WTC11 (cell line): ENCODE measurements at regions of chr9 and their contacts with region 1.

Region 1: DNA sequence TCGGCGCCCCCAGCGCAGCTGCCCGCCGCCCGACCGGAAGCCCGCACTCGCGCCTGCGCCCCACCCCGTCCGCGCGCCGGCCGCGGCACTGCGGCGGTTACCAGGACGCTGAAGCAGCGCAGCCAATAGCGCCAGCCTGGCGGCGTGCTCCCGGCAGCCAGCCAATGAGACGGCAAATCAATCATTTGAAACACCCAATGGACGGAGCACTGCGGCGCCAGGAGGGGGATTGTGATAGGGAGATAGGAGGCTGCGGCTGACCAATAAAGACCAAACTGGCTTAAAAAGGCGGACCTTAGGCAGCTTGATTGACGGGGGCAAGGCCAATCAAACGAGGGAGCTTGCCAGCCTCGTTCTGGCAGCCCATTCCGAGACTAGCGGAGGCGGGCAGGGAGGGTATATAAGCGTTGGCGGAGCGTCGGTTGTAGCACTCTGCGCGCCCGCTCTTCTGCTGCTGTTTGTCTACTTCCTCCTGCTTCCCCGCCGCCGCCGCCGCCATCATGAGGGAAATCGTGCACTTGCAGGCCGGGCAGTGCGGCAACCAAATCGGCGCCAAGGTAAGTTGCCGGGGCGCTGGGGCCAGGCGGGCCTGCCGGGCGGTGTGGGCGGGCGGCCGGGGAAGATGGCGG is at the start of gene TUBB4B:
- DNase-seq: peak; percentile 98
- ATAC-seq: peak; percentile 80
- H3K4me3 Mint-ChIP-seq: peak within 1 kb of the TSS; percentile 81
- H3K27ac Mint-ChIP-seq: peak within 1 kb of the TSS; percentile 87; the same call in 1 of the 2 replicates
- H3K4me1 Mint-ChIP-seq: peaks cover 39% of the 10 kb centered on the region
- H3K27me3 Mint-ChIP-seq: no peaks in the 10 kb centered on the region
- CTCF ChIP-seq: no peak
- total RNA-seq, gene TUBB4B: 373 to 376 TPM (median 375 TPM) in 3 replicates

Region 2: GRCh38 chr9:137070201-137070905 is 170.6 kb before region 1 on chr9 and contains the start of gene SAPCD2:
- CTCF ChIA-PET with region 1: interaction called, 16 read pairs
- POLR2A ChIA-PET with region 1: interaction called, 5 read pairs
- DNase-seq: peak; percentile 88
- ATAC-seq: peak; percentile 84
- H3K4me3 Mint-ChIP-seq: peak within 1 kb of the TSS; percentile 71
- H3K27ac Mint-ChIP-seq: peak within 1 kb of the TSS; percentile 95
- H3K4me1 Mint-ChIP-seq: peaks cover 34% of the 10 kb centered on the region
- H3K27me3 Mint-ChIP-seq: no peaks in the 10 kb centered on the region
- CTCF ChIP-seq: no peak
- total RNA-seq, gene SAPCD2: 52.0 to 67.0 TPM (median 53.6 TPM) in 3 replicates

Region 3: DNA sequence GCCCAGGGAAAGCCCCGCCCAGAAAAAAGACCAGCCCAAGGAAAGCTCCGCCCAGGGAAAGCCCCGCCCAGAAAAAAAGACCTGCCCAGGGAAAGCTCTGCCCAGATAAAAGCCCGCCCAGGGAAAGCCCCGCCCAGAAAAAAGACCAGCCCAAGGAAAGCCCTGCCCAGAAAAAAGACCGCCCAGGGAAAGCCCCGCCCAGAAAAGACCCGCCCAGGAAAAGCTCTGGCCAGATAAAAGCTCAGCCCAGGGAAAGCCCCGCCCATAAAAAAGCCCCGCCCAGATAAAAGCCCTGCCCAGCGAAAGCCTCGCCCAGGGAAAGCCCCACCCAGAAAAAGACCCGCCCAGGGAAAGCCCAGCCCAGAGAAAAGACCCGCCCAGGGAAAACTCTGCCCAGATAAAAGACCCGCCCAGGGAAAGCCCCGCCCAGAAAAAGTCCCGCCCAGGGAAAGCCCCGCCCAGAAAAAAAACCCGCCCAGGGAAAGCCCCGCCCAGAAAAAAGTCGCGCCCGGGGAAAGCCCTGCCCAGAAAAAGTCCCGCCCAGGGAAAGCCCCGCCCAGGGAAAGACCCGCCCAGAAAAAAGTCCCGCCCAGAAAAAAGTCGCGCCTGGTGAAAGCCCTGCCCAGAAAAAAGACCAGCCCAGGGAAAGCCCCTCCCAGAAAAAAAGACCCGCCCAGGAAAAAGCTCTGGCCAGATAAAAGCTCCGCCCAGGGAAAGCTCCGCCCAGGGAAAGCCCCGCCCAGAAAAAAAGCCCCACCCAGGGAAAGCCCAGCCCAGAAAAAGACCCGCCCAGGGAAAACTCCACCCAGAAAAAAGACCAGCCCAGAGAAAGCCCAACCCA is 90.1 kb before region 1 on chr9:
- CTCF ChIA-PET with region 1: interaction called, 18 read pairs
- POLR2A ChIA-PET with region 1: no interaction called
- DNase-seq: peak; percentile 80
- ATAC-seq: peak; percentile 54
- H3K4me3 Mint-ChIP-seq: no peak overlapping the region
- H3K27ac Mint-ChIP-seq: no peak overlapping the region
- H3K4me1 Mint-ChIP-seq: no peaks in the 10 kb centered on the region; the same call in 1 of the 2 replicates
- H3K27me3 Mint-ChIP-seq: peaks cover 17% of the 10 kb centered on the region
- CTCF ChIP-seq: no peak

Region 4: DNA sequence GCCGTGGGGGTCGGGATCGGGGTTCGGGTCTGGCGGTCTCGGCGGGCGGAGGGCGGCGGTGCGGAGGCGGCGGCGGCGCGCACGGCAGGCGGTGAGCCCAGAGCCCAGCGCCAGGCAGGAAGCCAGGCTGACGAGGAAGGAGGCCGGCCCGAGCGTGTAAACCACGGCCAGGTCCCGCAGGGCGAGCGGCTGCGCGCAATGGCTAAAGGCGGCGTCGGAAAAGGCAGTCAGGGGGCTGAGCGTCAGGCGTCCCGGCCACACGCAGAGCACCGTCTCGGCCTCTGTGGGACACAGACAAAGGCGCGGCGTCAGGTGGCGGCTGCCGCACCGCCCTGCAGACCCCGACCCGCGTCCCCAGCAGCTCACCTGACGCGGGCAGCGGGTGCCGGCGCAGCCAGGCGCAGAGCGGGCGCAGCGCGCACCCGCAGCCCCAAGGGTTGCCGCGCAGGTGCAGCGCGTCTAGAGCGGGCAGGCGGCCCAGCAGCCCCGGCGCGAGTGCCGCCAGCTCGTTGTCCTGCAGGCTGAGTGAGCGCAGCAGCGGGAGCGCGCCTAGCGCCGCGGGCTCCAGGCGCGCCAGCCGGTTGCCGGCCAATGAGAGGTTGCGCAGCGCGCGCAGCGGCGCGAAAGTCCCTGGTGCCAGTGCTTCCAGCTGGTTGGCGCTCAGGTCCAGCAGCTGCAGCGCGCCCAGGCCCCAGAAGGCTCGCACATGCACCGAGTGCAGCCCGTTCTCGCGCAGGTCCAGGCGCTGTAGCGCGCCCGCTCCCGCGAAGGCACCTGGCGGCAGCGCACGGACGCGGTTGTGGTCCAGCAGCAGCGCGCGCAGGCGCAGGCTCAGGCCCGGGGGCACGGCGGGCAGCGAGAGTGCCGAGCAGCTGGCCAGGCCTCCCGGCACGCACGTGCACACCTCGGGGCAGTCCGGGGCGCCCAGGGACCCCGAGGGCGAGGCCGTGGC is 71.8 kb before region 1 on chr9:
- CTCF ChIA-PET with region 1: interaction called, 17 read pairs
- POLR2A ChIA-PET with region 1: interaction called, 3 read pairs
- DNase-seq: peak; percentile 81
- ATAC-seq: peak; percentile 61
- H3K4me3 Mint-ChIP-seq: peak overlapping the region; percentile 62
- H3K27ac Mint-ChIP-seq: no peak overlapping the region
- H3K4me1 Mint-ChIP-seq: peaks cover 6% of the 10 kb centered on the region
- H3K27me3 Mint-ChIP-seq: peaks cover 64% of the 10 kb centered on the region
- CTCF ChIP-seq: no peak

Region 5: DNA sequence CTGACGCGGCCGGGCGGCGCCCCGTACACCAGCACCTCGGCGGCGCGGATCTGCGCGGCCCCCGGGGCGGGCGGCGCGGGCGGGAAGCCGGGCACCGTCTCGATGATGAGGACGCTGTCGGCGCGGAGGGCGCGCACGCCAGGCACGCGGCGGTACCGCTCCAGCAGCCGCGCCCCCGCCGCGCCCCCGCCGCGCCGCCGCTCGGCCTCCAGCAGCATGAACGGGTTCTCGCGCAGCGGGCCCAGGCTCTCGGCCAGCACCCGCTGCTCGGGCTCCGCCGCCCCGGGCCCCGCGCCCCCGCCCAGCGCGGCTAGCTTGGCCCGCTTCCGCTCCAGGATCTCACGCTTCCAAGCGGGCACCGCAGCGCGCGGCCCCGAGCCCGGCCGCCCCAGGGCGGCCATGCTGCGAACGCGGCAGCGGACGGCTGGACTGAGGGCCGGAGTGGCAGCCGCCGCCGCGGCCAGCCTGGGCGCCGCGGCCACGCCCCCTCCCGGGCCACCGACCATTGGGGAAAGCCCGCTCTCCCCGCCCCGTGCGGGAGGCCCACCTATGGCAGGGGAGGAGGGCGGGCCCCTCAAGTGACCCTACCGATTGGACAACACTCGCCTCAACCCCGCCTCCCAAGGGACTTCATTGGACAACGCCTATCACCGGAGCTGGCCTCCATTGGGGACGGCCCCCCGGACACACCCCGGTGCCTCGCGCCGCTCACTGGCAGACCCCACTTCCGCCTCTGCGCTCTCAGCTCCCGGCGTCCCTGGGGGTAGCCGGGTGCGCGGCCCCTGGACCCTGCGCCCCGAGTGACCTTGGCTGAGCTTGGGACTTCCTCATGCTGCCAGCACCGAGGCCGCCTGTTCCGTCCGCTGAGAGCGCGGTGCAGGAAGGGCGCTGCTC is 40.4 kb before region 1 on chr9 and contains the start of gene TPRN:
- CTCF ChIA-PET with region 1: interaction called, 28 read pairs
- POLR2A ChIA-PET with region 1: interaction called, 9 read pairs
- DNase-seq: peak; percentile 100
- ATAC-seq: peak; percentile 97
- H3K4me3 Mint-ChIP-seq: peak within 1 kb of the TSS; percentile 84
- H3K27ac Mint-ChIP-seq: peak within 1 kb of the TSS; percentile 91
- H3K4me1 Mint-ChIP-seq: peaks cover 33% of the 10 kb centered on the region
- H3K27me3 Mint-ChIP-seq: no peaks in the 10 kb centered on the region
- CTCF ChIP-seq: no peak
- total RNA-seq, gene TPRN: 33.4 to 43.1 TPM (median 38.1 TPM) in 3 replicates

Region 6: GRCh38 chr9:137254624-137255447 is 13.9 kb after region 1 on chr9 and contains the start of gene NELFB:
- CTCF ChIA-PET with region 1: interaction called, 59 read pairs
- POLR2A ChIA-PET with region 1: interaction called, 30 read pairs
- DNase-seq: peak; percentile 93
- ATAC-seq: peak; percentile 82
- H3K4me3 Mint-ChIP-seq: peak within 1 kb of the TSS; percentile 94
- H3K27ac Mint-ChIP-seq: peak within 1 kb of the TSS; percentile 86
- H3K4me1 Mint-ChIP-seq: peaks cover 8% of the 10 kb centered on the region
- H3K27me3 Mint-ChIP-seq: peaks cover 7% of the 10 kb centered on the region; the same call in 1 of the 2 replicates
- CTCF ChIP-seq: no peak
- total RNA-seq, gene NELFB: 93.7 to 95.0 TPM (median 94.7 TPM) in 3 replicates

Region 7: DNA sequence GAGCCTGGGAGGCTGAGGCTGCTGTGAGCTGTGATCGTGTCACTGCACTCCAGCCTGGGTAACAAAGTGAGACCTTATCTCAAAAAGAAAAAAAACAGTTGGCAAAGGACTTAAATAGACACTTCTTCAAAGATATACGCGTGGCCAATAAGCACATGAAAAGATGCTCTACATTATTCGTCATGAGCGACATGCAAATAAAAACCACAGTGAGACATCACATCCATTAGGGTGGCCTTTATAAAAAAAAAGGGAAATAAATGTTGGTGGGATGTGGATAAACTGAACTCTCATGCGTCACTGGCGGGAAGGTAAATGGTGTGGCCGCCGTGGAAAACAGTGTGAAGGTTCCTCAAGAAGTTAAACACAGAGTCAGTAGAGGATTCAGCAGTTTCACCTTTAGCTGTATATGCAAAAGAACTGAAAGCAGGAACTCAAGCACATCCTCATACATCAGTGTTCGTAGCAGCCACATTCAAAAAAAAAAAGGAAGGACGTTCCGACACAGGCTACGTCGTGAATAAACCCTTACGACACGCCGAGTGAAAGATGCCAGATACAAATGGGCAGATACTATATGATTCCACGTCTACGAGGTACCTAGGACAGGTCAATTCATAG is 85.6 kb after region 1 on chr9:
- CTCF ChIA-PET with region 1: no interaction called
- POLR2A ChIA-PET with region 1: no interaction called
- DNase-seq: no peak
- ATAC-seq: no peak
- H3K4me3 Mint-ChIP-seq: no peak overlapping the region
- H3K27ac Mint-ChIP-seq: no peak overlapping the region
- H3K4me1 Mint-ChIP-seq: no peaks in the 10 kb centered on the region
- H3K27me3 Mint-ChIP-seq: peaks cover 5% of the 10 kb centered on the region; the same call in 1 of the 2 replicates
- CTCF ChIP-seq: no peak